GM12878 (cell line): ENCODE measurements at regions of chr4 and their contacts with region 1.

Region 1: GRCh38 chr4:83217721-83218522 is 66.7 kb downstream of the COQ2 start:
- DNase-seq: peak; percentile 99
- ATAC-seq: peak; percentile 79
- H3K4me3 ChIP-seq: peak overlapping the region; percentile 17; the same call in 1 of the 2 replicates
- H3K27ac ChIP-seq: peak overlapping the region; percentile 97
- H3K4me1 ChIP-seq: peaks cover 70% of the 10 kb centered on the region
- H3K27me3 ChIP-seq: no peaks in the 10 kb centered on the region
- CTCF ChIP-seq: no peak
- EP300 ChIP-seq: peak; percentile 78 to 88; a peak in 2 of 4 replicates
- POLR2A ChIP-seq: peak; percentile 31; the same call in 1 of the 2 replicates
- RAD21 ChIP-seq: peak; percentile 20; the same call in 1 of the 2 replicates

Region 2: GRCh38 chr4:83012687-83013419 is 205.1 kb before region 1 on chr4:
- CTCF ChIA-PET with region 1: no interaction called
- POLR2A ChIA-PET with region 1: interaction called, 3 read pairs
- RAD21 ChIA-PET with region 1: no interaction called
- SMC1A ChIA-PET with region 1: no interaction called
- in situ Hi-C with region 1: no loop called
- intact Hi-C with region 1: loop called (anchors 5 kb)
- DNase-seq: peak; percentile 88
- ATAC-seq: peak; percentile 85
- H3K4me3 ChIP-seq: peak overlapping the region; percentile 77
- H3K27ac ChIP-seq: peak overlapping the region; percentile 60
- H3K4me1 ChIP-seq: no peaks in the 10 kb centered on the region
- H3K27me3 ChIP-seq: no peaks in the 10 kb centered on the region
- CTCF ChIP-seq: peak; percentile 41 to 47 (median 45); a peak in 5 of 6 replicates
- EP300 ChIP-seq: no peak
- POLR2A ChIP-seq: peak; percentile 78
- RAD21 ChIP-seq: peak; percentile 59

Region 3: GRCh38 chr4:83110223-83110945 is 107.5 kb before region 1 on chr4:
- CTCF ChIA-PET with region 1: interaction called, 26 read pairs
- POLR2A ChIA-PET with region 1: interaction called, 77 read pairs
- RAD21 ChIA-PET with region 1: interaction called, 127 read pairs
- SMC1A ChIA-PET with region 1: interaction called, 183 read pairs
- in situ Hi-C with region 1: loop called (anchors 5 kb)
- intact Hi-C with region 1: loop called (anchors 1 kb)
- DNase-seq: peak; percentile 90
- ATAC-seq: peak; percentile 80
- H3K4me3 ChIP-seq: peak overlapping the region; percentile 78
- H3K27ac ChIP-seq: peak overlapping the region; percentile 71
- H3K4me1 ChIP-seq: peaks cover 14% of the 10 kb centered on the region
- H3K27me3 ChIP-seq: no peaks in the 10 kb centered on the region
- CTCF ChIP-seq: peak; percentile 80 to 94 (median 89); a peak in 5 of 6 replicates
- EP300 ChIP-seq: peak; percentile 46 to 69; a peak in 2 of 4 replicates
- POLR2A ChIP-seq: peak; percentile 67
- RAD21 ChIP-seq: peak; percentile 46

Region 4: DNA sequence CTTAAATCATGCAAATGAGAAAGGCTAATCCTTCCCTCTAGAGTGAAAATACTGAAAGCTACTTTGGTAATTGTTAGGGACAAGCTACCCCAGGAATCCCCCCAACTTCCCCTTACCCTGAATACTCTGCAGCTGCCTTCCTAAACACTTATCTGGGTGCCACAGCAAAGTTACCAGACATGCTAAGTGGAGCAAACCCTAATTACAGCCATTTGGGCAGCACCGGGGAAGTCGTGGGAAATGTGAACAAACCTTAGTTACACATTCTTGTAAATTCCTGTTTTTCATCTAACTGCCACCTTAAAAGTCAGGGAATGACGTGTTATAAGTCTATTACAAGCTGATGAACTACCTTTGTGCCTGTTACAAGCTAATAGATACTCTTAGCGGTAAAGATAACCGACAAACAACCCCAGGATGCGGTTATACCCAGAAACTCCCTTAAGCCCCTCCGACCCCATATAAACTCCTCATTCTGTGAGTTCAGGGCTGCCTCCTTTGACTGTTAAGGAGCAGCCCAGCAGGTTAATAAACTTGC is 37.4 kb before region 1 on chr4:
- CTCF ChIA-PET with region 1: interaction called, 10 read pairs
- POLR2A ChIA-PET with region 1: interaction called, 19 read pairs
- RAD21 ChIA-PET with region 1: interaction called, 27 read pairs
- SMC1A ChIA-PET with region 1: interaction called, 51 read pairs
- in situ Hi-C with region 1: no loop called
- intact Hi-C with region 1: loop called (anchors 1 kb)
- DNase-seq: peak; percentile 79
- ATAC-seq: peak; percentile 67
- H3K4me3 ChIP-seq: peak overlapping the region; percentile 33; the same call in 1 of the 2 replicates
- H3K27ac ChIP-seq: peak overlapping the region; percentile 29; the same call in 1 of the 2 replicates
- H3K4me1 ChIP-seq: peaks cover 30% of the 10 kb centered on the region
- H3K27me3 ChIP-seq: no peaks in the 10 kb centered on the region
- CTCF ChIP-seq: no peak
- EP300 ChIP-seq: peak; percentile 9 to 50; a peak in 1 of 4 replicates
- POLR2A ChIP-seq: no peak
- RAD21 ChIP-seq: no peak

Region 5: DNA sequence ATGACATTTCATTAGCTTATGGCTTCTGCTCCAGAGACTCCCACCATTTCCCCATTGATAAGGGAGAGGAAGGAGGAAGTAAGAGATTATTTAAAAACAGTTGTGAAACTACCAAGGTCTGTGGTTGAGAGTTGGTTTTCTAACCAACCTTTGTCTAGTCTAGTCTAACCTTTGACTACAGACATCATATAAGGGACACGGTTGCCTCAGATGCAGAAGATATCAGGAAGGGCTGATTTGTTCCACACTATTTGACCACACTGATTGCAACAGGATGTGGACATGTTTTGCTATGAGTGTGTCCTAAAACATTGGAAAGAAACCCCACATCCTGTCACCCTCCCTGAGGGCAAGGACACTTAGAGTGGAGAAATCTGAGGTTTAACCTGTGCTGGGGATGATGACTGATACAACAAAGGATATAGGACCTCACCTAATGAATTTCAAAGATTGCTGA is 13.7 kb after region 1 on chr4:
- CTCF ChIA-PET with region 1: interaction called, 18 read pairs
- POLR2A ChIA-PET with region 1: interaction called, 5 read pairs
- RAD21 ChIA-PET with region 1: interaction called, 26 read pairs
- SMC1A ChIA-PET with region 1: interaction called, 152 read pairs
- in situ Hi-C with region 1: no loop called
- intact Hi-C with region 1: loop called (anchors 1 kb)
- DNase-seq: peak; percentile 88
- ATAC-seq: peak; percentile 80
- H3K4me3 ChIP-seq: no peak overlapping the region
- H3K27ac ChIP-seq: peak overlapping the region; percentile 4; the same call in 1 of the 2 replicates
- H3K4me1 ChIP-seq: peaks cover 31% of the 10 kb centered on the region
- H3K27me3 ChIP-seq: no peaks in the 10 kb centered on the region
- CTCF ChIP-seq: no peak
- EP300 ChIP-seq: peak in 1 of 2 experiments; percentile 58; a peak in 2 of 4 replicates
- POLR2A ChIP-seq: no peak
- RAD21 ChIP-seq: no peak

Region 6: DNA sequence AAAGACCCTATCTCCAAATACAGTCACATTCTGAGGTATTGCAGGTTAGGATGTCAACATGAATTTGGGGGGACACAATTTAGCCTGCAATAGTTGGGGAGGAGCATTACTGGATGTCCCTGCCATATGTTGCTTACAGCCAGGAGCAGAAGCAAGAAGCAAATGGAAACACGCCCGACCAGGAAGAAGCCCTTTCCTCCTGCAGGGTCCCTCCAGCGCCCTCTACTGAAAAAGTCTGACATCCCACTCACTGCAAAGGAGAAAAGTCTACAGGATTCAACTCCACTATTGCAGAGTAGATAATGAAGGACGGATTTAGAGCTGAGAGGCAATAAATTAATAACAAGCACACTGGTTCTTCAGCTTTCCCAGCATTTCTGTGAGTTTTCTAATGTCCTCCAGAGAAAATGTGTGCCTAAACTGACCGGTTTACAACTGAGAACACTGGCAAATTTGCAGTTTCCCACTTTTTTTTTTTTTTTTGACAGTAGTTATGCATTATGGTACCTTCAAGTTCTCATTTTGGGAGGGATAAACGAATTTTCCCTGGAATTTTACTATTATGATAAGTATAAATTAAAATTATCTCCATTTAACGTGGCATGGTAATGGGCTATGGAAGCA is 35.0 kb after region 1 on chr4:
- CTCF ChIA-PET with region 1: interaction called, 34 read pairs
- POLR2A ChIA-PET with region 1: interaction called, 21 read pairs
- RAD21 ChIA-PET with region 1: interaction called, 64 read pairs
- SMC1A ChIA-PET with region 1: interaction called, 145 read pairs
- in situ Hi-C with region 1: no loop called
- intact Hi-C with region 1: loop called (anchors 1 kb)
- DNase-seq: no peak
- ATAC-seq: peak; percentile 83
- H3K4me3 ChIP-seq: no peak overlapping the region
- H3K27ac ChIP-seq: no peak overlapping the region
- H3K4me1 ChIP-seq: peaks cover 13% of the 10 kb centered on the region; the same call in 1 of the 2 replicates
- H3K27me3 ChIP-seq: no peaks in the 10 kb centered on the region
- CTCF ChIP-seq: peak; percentile 82 to 86 (median 84)
- EP300 ChIP-seq: no peak
- POLR2A ChIP-seq: no peak
- RAD21 ChIP-seq: peak; percentile 93

Region 7: DNA sequence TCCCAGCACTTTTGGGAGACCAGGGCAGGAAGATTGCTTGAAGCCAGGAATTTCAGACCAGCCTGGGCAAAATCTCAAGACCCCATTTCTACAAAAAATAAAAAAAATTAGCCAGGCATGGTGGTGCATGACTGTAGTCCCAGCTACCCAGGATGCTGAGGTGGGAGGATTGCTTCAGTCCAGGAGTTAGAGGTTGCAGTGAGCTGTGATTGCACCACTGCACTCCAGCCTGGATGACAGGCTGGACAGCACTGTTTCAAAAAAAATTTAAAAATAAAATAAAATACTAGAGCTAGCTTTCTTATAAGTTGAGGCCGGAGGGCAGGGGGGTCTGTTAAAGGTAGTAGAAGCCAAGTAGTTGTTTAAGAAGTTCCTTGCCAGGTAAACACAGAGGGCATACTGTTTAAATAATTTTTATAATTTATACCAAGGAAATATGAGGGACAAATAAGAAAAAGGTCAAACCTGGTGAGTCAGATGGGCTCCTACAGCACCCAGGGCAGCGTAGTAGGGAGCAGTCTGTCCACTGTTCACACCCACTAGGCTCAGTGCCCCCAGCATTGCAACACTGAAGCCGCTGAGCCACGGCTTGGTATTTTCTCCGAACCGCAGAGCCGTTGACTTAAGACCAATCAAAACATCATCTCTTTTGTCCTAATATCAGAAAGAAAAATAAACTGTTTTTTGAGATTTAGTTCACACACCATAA is 49.4 kb after region 1 on chr4:
- CTCF ChIA-PET with region 1: interaction called, 9 read pairs
- POLR2A ChIA-PET with region 1: interaction called, 3 read pairs
- RAD21 ChIA-PET with region 1: interaction called, 27 read pairs
- SMC1A ChIA-PET with region 1: interaction called, 28 read pairs
- in situ Hi-C with region 1: no loop called
- intact Hi-C with region 1: no loop called
- DNase-seq: no peak
- ATAC-seq: no peak
- H3K4me3 ChIP-seq: no peak overlapping the region
- H3K27ac ChIP-seq: peak overlapping the region; percentile 40
- H3K4me1 ChIP-seq: peaks cover 22% of the 10 kb centered on the region
- H3K27me3 ChIP-seq: no peaks in the 10 kb centered on the region
- CTCF ChIP-seq: no peak
- EP300 ChIP-seq: no peak
- POLR2A ChIP-seq: no peak
- RAD21 ChIP-seq: no peak